ENCODE measurements at regions of chr5 and their contacts with region 1.

Region 1: DNA sequence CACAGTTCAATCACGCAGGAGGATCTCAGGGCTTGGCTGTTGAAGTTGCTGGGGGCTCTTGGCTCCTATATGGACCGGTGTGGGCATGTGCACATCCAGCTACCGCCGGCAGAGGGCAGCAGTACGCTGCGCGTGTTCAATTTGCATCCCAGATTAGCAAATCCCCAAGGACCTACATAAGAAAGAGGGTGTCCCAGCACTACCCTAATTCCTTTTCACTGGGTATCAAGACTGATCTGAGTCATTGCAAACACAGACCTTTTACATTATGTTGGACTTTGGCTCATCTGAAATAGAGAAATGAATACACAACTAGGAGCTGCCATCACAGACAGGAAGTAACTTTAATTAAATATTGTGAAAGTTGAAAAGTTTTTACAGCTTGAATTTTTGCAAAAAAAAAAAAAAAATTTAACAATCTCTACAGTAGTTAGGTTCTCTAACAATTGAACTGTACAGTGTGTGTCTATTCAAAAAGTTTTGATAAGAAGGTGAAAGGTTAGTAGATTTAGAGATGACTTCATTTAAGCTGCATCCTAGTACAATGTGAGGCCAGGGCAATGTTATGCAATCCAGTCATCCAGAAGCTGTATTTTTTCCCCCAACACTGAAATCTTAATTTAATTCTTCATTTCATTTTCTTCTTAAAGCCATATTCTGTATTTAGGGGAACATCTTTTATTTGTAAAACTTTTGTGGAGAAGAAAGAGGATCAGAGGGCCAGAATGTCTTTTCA is 404.0 kb downstream of the EBF1 start:
- DNase-seq: peak; percentile 72
- H3K4me3 ChIP-seq: no peak overlapping the region
- H3K27ac ChIP-seq: peak overlapping the region; percentile 70
- H3K4me1 ChIP-seq: peaks cover 42% of the 10 kb centered on the region
- H3K27me3 ChIP-seq: peaks cover 25% of the 10 kb centered on the region
- CTCF ChIP-seq: peak; percentile 99

Region 2: GRCh38 chr5:158174918-158175851 is 520.6 kb before region 1 on chr5:
- intact Hi-C with region 1: loop called (anchors 5 kb)
- DNase-seq: peak; percentile 67
- H3K4me3 ChIP-seq: no peak overlapping the region
- H3K27ac ChIP-seq: peak overlapping the region; percentile 74
- H3K4me1 ChIP-seq: peaks cover 24% of the 10 kb centered on the region
- H3K27me3 ChIP-seq: peaks cover 14% of the 10 kb centered on the region
- CTCF ChIP-seq: peak; percentile 85

Region 3: GRCh38 chr5:158780656-158781237 is 85.0 kb after region 1 on chr5:
- intact Hi-C with region 1: no loop called
- DNase-seq: no peak
- H3K4me3 ChIP-seq: no peak overlapping the region
- H3K27ac ChIP-seq: peak overlapping the region; percentile 9
- H3K4me1 ChIP-seq: peaks cover 41% of the 10 kb centered on the region
- H3K27me3 ChIP-seq: no peaks in the 10 kb centered on the region
- CTCF ChIP-seq: no peak

Region 4: DNA sequence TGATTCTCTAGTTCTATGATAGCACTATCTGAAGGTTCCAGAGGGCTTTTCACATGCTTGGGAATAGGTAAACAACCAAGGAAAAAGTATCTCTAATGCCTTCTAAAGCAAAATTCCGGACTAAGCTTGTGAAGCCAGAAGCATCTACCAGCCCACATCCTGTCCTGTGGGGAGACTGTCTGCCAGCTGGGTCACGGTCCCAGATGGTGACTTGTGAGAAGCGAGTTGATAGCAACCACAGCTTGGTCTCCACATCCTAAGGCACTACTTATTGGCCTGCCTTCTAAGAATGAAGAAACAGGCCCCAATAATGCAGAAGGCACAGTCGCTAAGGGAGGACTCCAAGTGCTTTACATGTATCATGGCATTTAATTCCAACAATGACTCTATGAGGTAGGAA is 1036.5 kb after region 1 on chr5:
- intact Hi-C with region 1: no loop called
- DNase-seq: no peak
- H3K4me3 ChIP-seq: no peak overlapping the region
- H3K27ac ChIP-seq: no peak overlapping the region
- H3K4me1 ChIP-seq: peaks cover 7% of the 10 kb centered on the region
- H3K27me3 ChIP-seq: no peaks in the 10 kb centered on the region
- CTCF ChIP-seq: no peak